ENCODE measurements at regions of chr2 and their contacts with region 1.

Region 1: DNA sequence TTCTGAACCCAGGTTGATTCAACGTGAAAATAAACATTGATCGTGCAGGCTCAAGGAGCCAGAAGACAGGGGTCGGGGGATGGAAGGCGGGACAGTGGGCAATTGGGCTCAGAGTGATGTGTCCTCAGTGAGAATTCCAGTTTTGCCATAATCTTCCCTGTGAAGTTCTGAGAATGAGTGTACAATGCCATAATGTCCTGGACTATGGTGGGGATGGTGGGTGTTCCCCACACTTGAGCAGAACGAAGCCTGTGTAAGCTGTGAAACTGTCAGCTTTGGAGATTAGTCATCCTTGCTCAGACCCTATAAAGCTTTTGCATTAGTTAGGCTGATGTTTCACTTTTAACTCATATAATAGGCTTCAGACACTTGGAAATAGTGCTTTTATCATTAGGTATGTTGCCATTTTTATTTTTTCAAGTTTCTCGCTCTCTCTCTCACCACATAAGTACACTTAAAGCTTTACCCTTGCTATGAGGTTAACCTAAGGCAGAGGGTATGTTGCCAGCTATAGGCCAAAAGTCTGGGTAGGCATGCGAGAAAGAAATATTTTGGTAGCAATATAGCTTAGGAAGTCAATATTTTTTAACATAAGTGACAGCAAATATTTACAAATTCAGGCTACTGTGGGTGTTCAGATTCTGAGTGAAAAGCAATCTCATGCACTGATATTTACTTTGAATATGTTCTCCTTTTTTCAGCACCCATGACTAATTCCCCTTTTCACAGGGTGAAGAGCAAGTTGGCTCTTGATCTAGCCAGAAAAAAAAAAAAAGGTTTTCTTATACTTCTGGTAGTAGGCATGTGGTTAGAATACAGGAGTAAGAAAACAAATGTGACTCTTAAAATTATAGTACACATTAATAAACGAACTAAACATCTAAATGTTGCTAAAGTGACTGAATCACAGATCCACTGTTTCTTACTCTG is 47.2 kb downstream of the CDC42EP3 start:
- DNase-seq: peak; percentile 43
- H3K4me3 Mint-ChIP-seq: no peak overlapping the region
- H3K27ac Mint-ChIP-seq: peak overlapping the region; percentile 38
- H3K4me1 Mint-ChIP-seq: peaks cover 67% of the 10 kb centered on the region
- H3K27me3 Mint-ChIP-seq: no peaks in the 10 kb centered on the region

Region 2: GRCh38 chr2:37119157-37119556 is 505.1 kb before region 1 on chr2:
- CTCF ChIA-PET with region 1: no interaction called
- intact Hi-C with region 1: no loop called
- DNase-seq: no peak
- H3K4me3 Mint-ChIP-seq: no peak overlapping the region
- H3K27ac Mint-ChIP-seq: no peak overlapping the region
- H3K4me1 Mint-ChIP-seq: no peaks in the 10 kb centered on the region
- H3K27me3 Mint-ChIP-seq: no peaks in the 10 kb centered on the region

Region 3: DNA sequence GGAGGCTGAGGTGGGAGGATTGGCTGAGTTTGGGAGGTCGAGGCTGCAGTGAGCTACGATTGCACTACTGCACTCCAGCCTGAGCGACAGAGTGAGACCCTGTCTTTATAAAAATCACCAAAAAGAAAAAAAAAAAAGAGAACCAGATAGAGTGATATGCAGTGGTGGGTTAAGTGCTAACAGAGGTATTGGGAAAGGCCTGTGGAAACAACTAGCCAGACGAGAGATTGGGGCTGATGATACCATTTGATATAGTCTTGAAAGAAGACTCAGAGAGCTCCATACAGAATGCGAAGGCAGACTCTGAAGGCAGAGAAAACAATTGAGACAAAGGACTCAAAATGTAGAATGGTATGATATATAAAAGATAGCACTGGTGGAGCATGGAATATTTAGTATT is 86.9 kb before region 1 on chr2:
- CTCF ChIA-PET with region 1: no interaction called
- intact Hi-C with region 1: loop called (anchors 1 kb)
- DNase-seq: no peak
- H3K4me3 Mint-ChIP-seq: no peak overlapping the region
- H3K27ac Mint-ChIP-seq: no peak overlapping the region
- H3K4me1 Mint-ChIP-seq: no peaks in the 10 kb centered on the region
- H3K27me3 Mint-ChIP-seq: no peaks in the 10 kb centered on the region

Region 4: GRCh38 chr2:37654932-37655331 is 30.7 kb after region 1 on chr2:
- CTCF ChIA-PET with region 1: no interaction called
- intact Hi-C with region 1: loop called (anchors 1 kb)
- DNase-seq: no peak
- H3K4me3 Mint-ChIP-seq: peak overlapping the region; percentile 33
- H3K27ac Mint-ChIP-seq: peak overlapping the region; percentile 71
- H3K4me1 Mint-ChIP-seq: peaks cover 80% of the 10 kb centered on the region
- H3K27me3 Mint-ChIP-seq: no peaks in the 10 kb centered on the region

Region 5: DNA sequence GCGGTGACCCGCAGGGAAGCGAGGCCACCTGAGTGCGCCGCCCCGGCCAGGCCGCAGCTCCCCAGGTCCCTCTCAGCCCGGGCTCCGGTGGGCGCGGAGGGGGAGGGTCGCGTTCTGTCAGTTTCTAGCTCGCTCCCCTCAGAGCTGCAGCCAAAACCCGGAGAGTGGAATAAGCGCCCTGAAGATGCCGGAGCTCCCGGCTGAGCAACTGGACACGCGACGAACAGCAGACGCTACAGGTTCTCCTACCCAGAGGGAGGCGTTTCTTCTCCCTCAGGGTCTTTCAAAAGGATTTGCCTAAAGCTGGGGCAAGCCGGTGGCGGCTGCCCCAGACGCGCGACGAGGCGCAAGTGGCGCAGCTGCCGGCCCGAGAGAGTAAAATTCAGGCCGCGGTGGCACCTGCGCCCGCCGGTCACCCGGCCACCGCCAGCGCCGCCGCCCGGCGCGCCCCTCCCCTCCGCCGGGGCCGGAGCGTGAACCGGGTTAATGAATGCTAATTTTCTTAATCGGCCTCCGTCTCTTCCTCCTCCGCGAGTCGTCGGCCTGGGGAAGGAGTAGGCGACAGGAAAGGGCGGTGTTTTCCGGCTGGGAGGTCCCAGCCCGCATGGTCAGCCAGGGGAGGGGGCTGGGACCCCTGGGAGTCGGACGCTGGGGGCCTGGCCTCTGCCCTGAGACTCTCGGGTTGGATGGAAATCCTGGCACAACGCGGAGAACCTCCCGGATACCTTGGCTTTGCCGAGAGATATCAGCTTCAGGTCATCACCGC is 48.1 kb after region 1 on chr2:
- CTCF ChIA-PET with region 1: interaction called, 3 read pairs
- intact Hi-C with region 1: loop called (anchors 2 kb)
- DNase-seq: peak; percentile 71
- H3K4me3 Mint-ChIP-seq: peak overlapping the region; percentile 75
- H3K27ac Mint-ChIP-seq: peak overlapping the region; percentile 63
- H3K4me1 Mint-ChIP-seq: peaks cover 40% of the 10 kb centered on the region
- H3K27me3 Mint-ChIP-seq: no peaks in the 10 kb centered on the region

Region 6: DNA sequence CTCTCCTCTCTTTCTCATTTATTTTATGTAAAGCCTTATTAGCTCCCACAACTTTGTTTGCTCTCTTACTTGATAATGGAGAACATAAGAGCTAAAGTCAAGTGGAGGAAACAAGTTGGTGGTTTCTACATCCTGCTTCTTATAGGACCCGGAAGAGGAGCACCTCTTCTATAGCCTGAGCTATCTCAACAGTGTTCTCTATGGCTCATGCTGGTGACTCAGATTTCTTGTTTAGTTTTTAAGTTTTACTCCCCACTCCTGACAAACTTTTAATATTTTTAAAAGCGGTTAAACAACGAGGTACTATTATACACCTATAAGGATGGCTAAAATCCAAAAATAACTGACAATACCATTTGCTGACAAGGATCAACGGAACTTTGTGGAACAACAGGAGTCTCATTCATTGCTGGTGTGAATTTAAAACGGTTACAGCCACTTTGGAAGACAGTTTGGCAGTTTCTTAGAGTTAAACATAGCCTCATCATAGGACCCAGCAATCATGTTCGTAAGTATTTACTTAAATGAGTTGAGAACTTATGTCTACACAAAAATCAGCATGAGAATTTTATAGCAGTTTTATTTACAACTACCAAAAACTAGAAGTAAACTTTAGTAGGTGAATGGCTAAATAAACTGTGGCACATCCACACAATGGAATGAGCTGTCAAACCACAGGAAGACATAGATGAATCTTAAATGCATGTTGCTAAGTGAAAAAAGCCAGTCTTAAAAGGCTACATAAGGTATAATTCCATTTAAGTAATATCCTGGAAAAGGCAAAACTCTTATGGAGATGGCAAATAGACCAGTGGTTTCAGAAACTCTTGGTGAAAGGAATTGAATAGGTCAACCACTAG is 59.9 kb after region 1 on chr2:
- CTCF ChIA-PET with region 1: no interaction called
- intact Hi-C with region 1: loop called (anchors 1 kb)
- DNase-seq: no peak
- H3K4me3 Mint-ChIP-seq: no peak overlapping the region
- H3K27ac Mint-ChIP-seq: peak overlapping the region; percentile 81
- H3K4me1 Mint-ChIP-seq: peaks cover 26% of the 10 kb centered on the region
- H3K27me3 Mint-ChIP-seq: no peaks in the 10 kb centered on the region

Region 7: GRCh38 chr2:37767956-37768925 is 144.0 kb after region 1 on chr2:
- CTCF ChIA-PET with region 1: no interaction called
- intact Hi-C with region 1: no loop called
- DNase-seq: no peak
- H3K4me3 Mint-ChIP-seq: no peak overlapping the region
- H3K27ac Mint-ChIP-seq: no peak overlapping the region
- H3K4me1 Mint-ChIP-seq: peaks cover 4% of the 10 kb centered on the region
- H3K27me3 Mint-ChIP-seq: no peaks in the 10 kb centered on the region

Region 8: GRCh38 chr2:37871456-37872191 is 247.4 kb after region 1 on chr2:
- CTCF ChIA-PET with region 1: no interaction called
- intact Hi-C with region 1: loop called (anchors 1 kb)
- DNase-seq: no peak
- H3K4me3 Mint-ChIP-seq: peak overlapping the region; percentile 25
- H3K27ac Mint-ChIP-seq: peak overlapping the region; percentile 86
- H3K4me1 Mint-ChIP-seq: peaks cover 30% of the 10 kb centered on the region
- H3K27me3 Mint-ChIP-seq: peaks cover 12% of the 10 kb centered on the region